Lower leg skin (tissue), 4 donors: ENCODE measurements at regions of chr15 and their contacts with region 1.

Region 1: GRCh38 chr15:44129911-44130310 is 65.2 kb downstream of the FRMD5 start:
- DNase-seq: no peak
- H3K4me3 ChIP-seq: no peak overlapping the region
- CTCF ChIP-seq: no peak
- POLR2A ChIP-seq: no peak

Region 2: DNA sequence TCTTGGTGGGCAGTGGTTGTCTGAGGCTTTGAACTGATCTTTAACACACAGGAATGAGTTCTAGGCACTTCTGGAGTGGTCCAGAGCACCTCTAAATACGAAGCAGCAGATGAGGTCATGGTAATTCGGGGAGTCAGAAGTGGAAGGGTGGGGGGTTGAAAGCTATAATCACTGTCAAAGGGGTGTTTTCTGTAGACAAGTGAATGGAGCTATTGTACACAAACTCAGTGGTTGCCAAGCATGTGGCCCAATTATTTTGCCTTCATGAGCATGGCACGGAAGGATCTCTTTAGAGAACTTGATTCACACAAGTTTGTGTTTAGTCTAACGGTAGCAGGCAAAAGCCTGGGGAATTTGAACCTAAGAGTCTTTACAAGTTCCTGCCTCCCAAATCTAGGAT is 58.9 kb after region 1 on chr15:
- intact Hi-C with region 1: loop called (anchors 10 kb)
- DNase-seq: no peak
- H3K4me3 ChIP-seq: no peak overlapping the region
- CTCF ChIP-seq: no peak
- POLR2A ChIP-seq: no peak

Region 3: DNA sequence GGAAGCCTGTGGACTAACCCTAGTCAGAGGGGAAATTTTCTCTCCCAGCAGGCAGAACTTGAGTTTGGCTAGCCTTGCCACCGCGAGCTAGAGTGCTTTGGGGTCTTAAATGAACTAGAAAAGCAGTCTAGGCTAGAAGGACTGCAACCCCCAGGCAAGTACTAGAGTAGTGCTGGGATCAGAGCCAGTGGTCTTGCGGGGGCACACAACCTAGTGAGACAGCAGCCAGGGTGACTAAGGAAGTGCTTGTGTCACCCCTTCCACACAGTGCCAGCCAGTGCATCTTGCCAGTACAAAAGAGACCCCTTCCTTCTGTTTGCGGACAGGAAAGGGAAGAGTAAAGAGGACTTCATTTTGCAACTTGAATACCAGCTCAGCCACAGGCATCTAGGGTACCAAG is 217.6 kb after region 1 on chr15:
- intact Hi-C with region 1: no loop called
- DNase-seq: no peak
- H3K4me3 ChIP-seq: no peak overlapping the region
- CTCF ChIP-seq: no peak
- POLR2A ChIP-seq: no peak

Region 4: GRCh38 chr15:44782516-44782915 is 652.6 kb after region 1 on chr15:
- intact Hi-C with region 1: no loop called
- DNase-seq: no peak
- H3K4me3 ChIP-seq: no peak overlapping the region
- CTCF ChIP-seq: no peak
- POLR2A ChIP-seq: no peak

Region 5: GRCh38 chr15:44910981-44911625 is 781.2 kb after region 1 on chr15:
- intact Hi-C with region 1: no loop called
- DNase-seq: no peak
- H3K4me3 ChIP-seq: no peak overlapping the region
- CTCF ChIP-seq: no peak
- POLR2A ChIP-seq: no peak

Region 6: GRCh38 chr15:45980376-45980775 is 1850.5 kb after region 1 on chr15:
- intact Hi-C with region 1: no loop called
- DNase-seq: no peak
- H3K4me3 ChIP-seq: no peak overlapping the region
- CTCF ChIP-seq: no peak
- POLR2A ChIP-seq: no peak